Common myeloid progenitor, CD34-positive (primary cell): ENCODE measurements at regions of chr3 and their contacts with region 1.

Region 1: GRCh38 chr3:100073899-100074307 is 40.4 kb downstream of the FILIP1L start:
- DNase-seq: peak; percentile 64 to 87 (median 67)
- H3K4me3 ChIP-seq: peak overlapping the region in 6 of 7 experiments; percentile 13 to 65 (median 48)
- H3K27ac ChIP-seq: peak overlapping the region in 1 of 2 experiments; percentile 62
- H3K4me1 ChIP-seq: peaks cover 23 to 66% (median 33%) of the 10 kb centered on the region in 4 experiments
- H3K27me3 ChIP-seq: no peaks in the 10 kb centered on the region

Region 2: GRCh38 chr3:100084100-100084806 is 10.3 kb after region 1 on chr3:
- CTCF ChIA-PET with region 1: interaction called, 13 read pairs
- POLR2A ChIA-PET with region 1: no interaction called
- DNase-seq: peak in 2 of 3 donors; percentile 55 to 70
- H3K4me3 ChIP-seq: no peak overlapping the region
- H3K27ac ChIP-seq: no peak overlapping the region
- H3K4me1 ChIP-seq: peaks cover 0 to 29% (median 8%) of the 10 kb centered on the region in 4 experiments
- H3K27me3 ChIP-seq: no peaks in the 10 kb centered on the region

Region 3: GRCh38 chr3:100149130-100149529 is 75.2 kb after region 1 on chr3:
- CTCF ChIA-PET with region 1: no interaction called
- POLR2A ChIA-PET with region 1: no interaction called
- DNase-seq: peak in 2 of 3 donors; percentile 11 to 15
- H3K4me3 ChIP-seq: no peak overlapping the region
- H3K27ac ChIP-seq: no peak overlapping the region
- H3K4me1 ChIP-seq: peaks cover 0 to 5% (median 0%) of the 10 kb centered on the region in 4 experiments
- H3K27me3 ChIP-seq: no peaks in the 10 kb centered on the region